ENCODE measurements at regions of chr4 and their contacts with region 1.

Region 1: GRCh38 chr4:78951862-78952472 is 12.7 kb upstream of the PAQR3 start:
- DNase-seq: peak; percentile 30
- CTCF ChIP-seq: peak; percentile 60

Region 2: DNA sequence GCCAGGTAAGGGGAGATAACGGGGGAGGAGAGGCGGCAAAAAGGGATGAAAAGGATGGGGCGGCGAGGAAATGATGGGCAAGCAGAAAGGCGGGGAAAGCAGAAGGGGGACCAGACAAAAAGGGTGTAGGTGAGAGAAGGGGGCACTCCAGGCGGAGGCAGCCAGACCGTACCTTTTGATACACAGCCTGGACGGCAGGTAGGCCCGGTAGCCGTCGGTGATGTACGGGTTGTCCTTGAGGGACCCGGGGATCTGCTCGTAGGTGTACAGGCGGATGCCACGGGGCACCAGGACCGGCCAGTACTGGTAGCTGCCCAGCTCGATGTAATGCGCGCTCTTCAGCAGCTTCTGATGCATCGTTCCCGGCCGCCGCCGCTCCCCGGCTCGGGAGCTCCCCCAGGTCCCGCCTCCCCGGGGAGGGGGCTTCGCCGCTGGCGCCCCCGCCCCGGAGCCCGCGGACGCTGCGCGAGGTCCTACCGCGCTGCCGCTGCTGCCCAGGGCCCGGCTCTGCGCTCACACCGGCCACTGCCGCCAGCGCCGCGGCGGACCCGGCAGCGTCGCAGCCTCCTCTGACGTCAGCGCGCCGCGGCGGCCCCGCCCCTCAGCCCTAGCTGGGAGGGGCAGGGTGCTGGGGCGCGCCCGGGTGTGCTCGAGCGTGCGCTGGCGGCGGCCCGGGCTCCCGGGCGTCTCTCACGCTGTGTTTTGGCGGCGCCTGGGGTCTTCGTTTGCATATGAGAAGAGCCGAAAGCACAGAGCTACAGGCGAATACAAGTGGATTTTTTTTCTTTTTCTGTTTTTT is 12.9 kb before region 1 on chr4 and contains the start of gene PAQR3:
- CTCF ChIA-PET with region 1: interaction called, 20 read pairs
- POLR2A ChIA-PET with region 1: no interaction called
- DNase-seq: peak; percentile 95
- CTCF ChIP-seq: no peak

Measured in GM10248 (cell line).